Activated T-helper 1 cell treated with anti-CD3 and anti-CD28 coated beads, Interleukin-12 subunit alpha, Interleukin-12 subunit beta, Interleukin-2, Interleukin-4 antibody, amounts not matched to agents 30 ng/mL and 10 ng/mL and 1 ng/mL, durations not matched to agents 14 hours and 24 hours and 36 hours (primary cell): ENCODE measurements at regions of chr6 and their contacts with region 1.

Region 1: DNA sequence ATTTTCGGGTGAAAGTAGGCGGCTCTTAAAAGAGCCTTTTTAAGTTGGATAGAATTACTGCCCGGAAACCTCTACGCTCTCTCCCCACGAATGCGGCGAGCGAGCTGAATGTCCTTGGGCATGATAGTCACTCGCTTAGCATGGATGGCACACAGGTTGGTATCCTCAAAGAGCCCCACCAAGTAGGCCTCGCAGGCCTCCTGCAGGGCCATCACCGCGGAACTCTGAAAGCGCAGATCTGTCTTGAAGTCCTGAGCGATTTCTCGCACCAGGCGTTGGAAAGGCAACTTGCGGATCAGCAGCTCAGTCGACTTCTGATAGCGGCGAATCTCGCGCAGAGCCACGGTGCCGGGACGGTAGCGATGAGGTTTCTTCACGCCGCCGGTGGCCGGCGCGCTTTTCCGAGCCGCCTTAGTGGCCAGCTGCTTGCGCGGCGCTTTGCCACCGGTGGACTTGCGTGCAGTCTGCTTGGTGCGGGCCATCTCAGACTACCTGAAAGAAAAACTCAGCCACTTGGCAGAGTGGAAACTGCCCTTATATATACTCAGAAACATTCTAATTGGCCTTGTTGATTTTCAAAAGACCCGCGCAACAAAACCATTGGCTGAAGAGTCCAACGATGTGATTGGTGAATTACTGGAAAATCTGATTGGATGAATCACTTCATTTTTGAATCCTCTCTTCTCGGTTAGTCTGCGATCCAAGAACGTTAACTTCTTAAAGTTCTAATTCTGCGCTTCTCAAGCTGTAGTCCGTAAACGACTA is 93.9 kb upstream of the BTN3A2 start:
- DNase-seq: peak; percentile 80
- H3K4me3 Mint-ChIP-seq: no peak overlapping the region
- H3K27ac Mint-ChIP-seq: no peak overlapping the region
- H3K4me1 Mint-ChIP-seq: peaks cover 45% of the 10 kb centered on the region
- H3K27me3 Mint-ChIP-seq: no peaks in the 10 kb centered on the region

Region 2: DNA sequence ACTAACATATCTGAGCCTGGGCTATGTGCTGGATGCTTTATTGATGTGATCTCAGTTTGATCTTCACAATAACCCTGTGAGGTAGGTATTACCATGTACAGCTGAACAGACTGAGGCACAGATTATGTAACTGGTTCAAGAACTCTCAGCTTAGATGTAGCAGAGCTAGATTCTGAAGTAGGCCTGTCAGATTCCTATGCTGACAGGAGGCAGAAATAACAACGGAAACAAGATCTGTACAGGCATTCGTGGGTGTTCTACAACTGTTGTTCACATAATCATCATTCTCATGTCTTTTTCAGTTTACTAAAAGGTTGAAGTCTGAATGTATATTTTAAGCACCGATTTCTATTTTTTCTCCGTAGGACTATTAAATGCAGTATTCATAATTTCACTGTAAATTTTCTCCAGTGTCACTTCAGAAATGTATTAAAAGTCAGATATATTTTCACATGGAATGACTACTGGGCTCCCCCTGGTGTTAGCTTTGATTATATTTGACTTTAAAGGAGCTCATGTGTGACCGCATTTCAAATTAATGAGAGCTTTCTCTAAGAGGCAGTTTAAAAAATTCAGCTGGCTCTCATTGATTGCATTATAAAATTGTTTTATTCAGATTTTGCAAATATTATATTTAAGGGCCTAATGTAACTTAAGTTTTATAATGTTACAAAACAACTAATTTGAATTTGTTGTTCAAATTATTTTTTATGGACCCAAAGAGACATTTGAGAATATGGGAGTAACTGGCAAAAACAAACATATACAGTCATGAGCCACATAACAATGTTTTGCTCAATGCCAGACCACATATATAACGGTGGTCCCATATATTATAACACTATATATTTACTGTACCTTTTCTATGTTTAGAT is 553.0 kb before region 1 on chr6:
- intact Hi-C with region 1: no loop called
- DNase-seq: no peak
- H3K4me3 Mint-ChIP-seq: no peak overlapping the region
- H3K27ac Mint-ChIP-seq: no peak overlapping the region
- H3K4me1 Mint-ChIP-seq: no peaks in the 10 kb centered on the region
- H3K27me3 Mint-ChIP-seq: peaks cover 7% of the 10 kb centered on the region

Region 3: GRCh38 chr6:26103770-26104456 is 167.2 kb before region 1 on chr6:
- intact Hi-C with region 1: loop called (anchors 5 kb)
- DNase-seq: peak; percentile 90
- H3K4me3 Mint-ChIP-seq: peak overlapping the region; percentile 90
- H3K27ac Mint-ChIP-seq: peak overlapping the region; percentile 99
- H3K4me1 Mint-ChIP-seq: peaks cover 25% of the 10 kb centered on the region
- H3K27me3 Mint-ChIP-seq: peaks cover 2% of the 10 kb centered on the region

Region 4: DNA sequence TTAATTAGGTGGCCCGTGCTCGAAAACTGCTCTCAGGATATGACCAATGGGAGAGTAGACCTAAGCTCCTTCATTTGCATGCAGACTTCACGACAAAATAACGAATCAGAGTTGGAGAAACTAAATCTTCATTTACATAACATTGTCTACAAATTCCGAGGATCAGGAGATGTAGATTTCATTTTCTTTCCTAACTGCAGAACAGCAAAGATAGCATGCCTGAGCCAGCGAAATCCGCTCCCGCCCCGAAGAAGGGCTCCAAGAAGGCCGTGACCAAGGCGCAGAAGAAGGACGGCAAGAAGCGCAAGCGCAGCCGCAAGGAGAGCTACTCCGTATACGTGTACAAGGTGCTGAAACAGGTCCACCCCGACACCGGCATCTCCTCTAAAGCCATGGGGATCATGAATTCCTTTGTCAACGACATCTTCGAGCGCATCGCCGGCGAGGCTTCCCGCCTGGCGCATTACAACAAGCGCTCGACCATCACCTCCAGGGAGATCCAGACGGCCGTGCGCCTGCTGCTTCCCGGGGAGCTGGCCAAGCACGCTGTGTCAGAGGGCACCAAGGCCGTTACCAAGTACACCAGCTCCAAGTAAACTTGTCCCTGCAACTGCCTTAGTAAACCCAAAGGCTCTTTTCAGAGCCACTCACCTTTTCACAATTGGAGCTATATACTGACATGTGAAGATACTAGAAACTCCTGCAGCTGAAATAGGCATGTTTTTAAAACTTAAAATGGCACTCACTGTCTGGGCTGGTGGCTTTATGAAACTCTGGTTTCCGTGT is 87.3 kb before region 1 on chr6:
- intact Hi-C with region 1: loop called (anchors 2 kb)
- DNase-seq: peak; percentile 71
- H3K4me3 Mint-ChIP-seq: peak overlapping the region; percentile 86
- H3K27ac Mint-ChIP-seq: peak overlapping the region; percentile 97
- H3K4me1 Mint-ChIP-seq: peaks cover 58% of the 10 kb centered on the region
- H3K27me3 Mint-ChIP-seq: no peaks in the 10 kb centered on the region

Region 5: DNA sequence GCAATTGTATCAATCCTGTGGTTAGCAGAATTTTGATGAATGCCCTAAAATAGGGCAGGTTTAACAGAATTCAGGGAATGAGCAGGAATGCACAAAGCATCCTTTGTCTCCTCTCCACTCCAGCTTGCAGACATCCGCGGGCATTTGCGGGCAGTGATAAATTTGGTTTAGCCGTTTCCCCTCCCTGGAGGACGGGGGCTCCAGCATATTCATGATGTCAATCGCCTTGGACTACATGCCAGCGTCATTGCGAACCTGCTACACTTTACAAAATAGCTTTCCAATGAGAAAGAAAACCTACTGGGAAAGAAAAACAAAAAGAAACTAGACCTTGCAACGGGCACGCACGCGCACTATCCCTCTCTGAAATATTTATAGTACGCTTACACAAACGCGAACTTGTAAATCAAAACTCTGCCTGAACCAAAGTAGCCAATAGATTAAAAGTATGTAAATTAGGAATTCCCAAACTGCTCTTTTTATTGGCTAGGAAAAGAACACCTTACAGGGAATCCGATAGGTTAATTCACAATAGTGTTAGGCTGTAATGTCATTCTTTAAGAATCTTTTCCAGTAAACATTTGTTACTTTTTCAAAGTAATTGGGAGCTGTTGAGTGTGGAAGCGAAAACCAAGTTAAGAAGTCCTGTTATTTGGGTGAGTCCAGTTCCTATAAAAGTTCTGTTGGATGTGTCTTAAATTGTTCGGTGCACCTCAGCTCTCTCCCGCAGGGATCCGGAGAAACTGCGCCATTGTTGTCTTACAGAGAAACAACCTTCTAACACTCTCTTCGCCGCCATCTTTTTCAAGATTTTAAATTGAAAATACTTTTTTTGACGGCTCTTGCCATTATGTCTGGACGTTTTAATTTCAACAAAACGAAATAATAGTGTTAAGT is 47.2 kb before region 1 on chr6:
- intact Hi-C with region 1: loop called (anchors 2 kb)
- DNase-seq: peak; percentile 56
- H3K4me3 Mint-ChIP-seq: no peak overlapping the region
- H3K27ac Mint-ChIP-seq: no peak overlapping the region
- H3K4me1 Mint-ChIP-seq: peaks cover 10% of the 10 kb centered on the region
- H3K27me3 Mint-ChIP-seq: no peaks in the 10 kb centered on the region

Region 6: DNA sequence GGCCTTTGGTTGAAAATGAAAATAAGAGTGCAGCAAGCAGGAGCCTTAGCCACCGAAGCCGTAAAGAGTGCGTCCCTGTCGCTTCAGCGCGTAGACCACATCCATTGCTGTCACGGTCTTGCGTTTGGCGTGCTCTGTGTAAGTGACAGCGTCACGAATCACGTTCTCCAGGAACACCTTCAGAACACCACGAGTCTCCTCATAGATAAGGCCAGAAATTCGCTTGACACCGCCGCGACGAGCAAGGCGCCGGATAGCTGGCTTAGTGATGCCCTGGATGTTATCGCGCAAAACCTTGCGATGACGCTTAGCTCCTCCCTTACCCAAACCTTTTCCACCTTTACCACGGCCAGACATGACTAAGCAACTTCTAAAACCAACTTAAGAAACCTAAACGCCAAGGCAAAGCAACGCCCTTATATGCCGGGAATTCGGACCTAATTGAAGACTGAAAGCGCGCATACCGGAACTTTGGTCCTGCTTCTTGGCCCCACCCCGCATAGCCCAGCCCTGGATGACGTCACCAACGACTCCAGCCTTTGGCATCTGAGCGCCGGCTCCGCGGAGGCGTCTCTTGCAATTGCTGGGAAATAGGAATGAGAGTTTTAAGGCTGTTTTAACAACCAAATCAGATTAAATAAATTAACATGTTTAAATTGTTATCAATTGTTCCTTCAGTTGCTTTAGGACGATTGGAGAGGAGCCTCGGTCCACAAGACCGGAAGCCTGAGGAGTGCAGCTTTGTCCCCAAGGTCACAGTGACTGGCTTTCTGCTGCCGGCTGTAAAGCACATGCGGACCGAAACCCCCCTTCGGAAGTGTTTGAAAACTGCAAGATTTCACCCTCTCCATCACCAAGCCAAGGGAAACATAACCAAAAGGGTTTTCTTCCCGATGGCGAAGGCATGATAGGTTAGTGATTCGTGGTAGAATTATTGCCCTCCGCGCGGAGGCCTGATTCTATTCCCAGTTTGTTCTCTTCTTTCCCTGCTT is 14.4 kb after region 1 on chr6:
- intact Hi-C with region 1: loop called (anchors 1 kb)
- DNase-seq: peak; percentile 95
- H3K4me3 Mint-ChIP-seq: peak overlapping the region; percentile 93
- H3K27ac Mint-ChIP-seq: peak overlapping the region; percentile 93
- H3K4me1 Mint-ChIP-seq: peaks cover 44% of the 10 kb centered on the region
- H3K27me3 Mint-ChIP-seq: peaks cover 4% of the 10 kb centered on the region

Region 7: GRCh38 chr6:26473758-26474438 is 202.8 kb after region 1 on chr6:
- intact Hi-C with region 1: loop called (anchors 5 kb)
- DNase-seq: peak; percentile 78
- H3K4me3 Mint-ChIP-seq: peak overlapping the region; percentile 99
- H3K27ac Mint-ChIP-seq: peak overlapping the region; percentile 100
- H3K4me1 Mint-ChIP-seq: peaks cover 46% of the 10 kb centered on the region
- H3K27me3 Mint-ChIP-seq: no peaks in the 10 kb centered on the region